Natural killer cell (primary cell): ENCODE measurements at regions of chr14 and their contacts with region 1.

Region 1: DNA sequence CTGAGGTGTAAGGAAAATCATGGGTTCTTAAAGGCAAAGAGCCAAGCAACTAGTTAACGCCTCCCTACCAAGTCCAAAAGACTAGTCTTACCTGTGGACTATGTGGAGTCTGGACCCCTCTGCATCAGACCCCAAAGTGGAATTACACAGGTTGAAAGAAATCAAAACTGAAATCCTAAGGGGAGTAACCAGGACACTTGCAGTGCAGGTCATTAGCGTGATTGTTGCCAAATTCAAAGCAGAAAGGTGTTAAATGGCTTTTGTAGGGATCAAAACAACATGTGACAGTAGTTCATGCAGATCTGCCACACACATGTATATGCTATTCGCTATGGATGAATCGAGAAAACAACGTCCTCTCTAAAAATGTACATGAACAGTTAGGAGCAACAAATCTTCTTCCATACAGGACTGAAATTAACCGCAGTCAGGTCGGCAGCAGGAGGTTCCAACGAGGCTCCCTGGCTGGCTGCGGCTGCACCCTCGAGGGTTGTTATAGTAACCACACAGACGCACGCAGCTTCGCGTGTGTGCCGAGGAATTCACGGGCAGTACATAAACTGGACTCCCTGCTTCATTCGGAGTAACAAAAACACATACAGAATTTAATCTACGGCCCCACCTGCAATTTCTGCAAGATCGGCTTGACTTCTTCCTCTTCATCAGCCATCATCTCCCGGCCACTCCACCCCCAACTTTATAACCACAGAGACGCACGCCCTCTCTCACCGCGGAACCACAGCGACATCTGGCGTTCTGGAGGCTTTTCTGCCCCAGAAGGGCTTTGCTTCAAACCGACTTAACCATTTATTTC is at the start of gene TTC5:
- DNase-seq: peak; percentile 91 to 96
- ATAC-seq: peak; percentile 99 to 100 (median 99)
- H3K4me3 ChIP-seq: peak within 1 kb of the TSS; percentile 70
- H3K4me3 Mint-ChIP-seq: peak within 1 kb of the TSS; percentile 92
- H3K27ac ChIP-seq: peak within 1 kb of the TSS; percentile 39
- H3K27ac Mint-ChIP-seq: peak within 1 kb of the TSS; percentile 77 to 82
- H3K4me1 ChIP-seq: peaks cover 4% of the 10 kb centered on the region
- H3K4me1 Mint-ChIP-seq: peaks cover 16 to 26% of the 10 kb centered on the region in 2 donors
- H3K27me3 ChIP-seq: no peaks in the 10 kb centered on the region
- H3K27me3 Mint-ChIP-seq: no peaks in the 10 kb centered on the region
- CTCF ChIP-seq: peak; percentile 74
- total RNA-seq, gene TTC5: 18.1 to 23.5 (median 21.6) TPM

Region 2: DNA sequence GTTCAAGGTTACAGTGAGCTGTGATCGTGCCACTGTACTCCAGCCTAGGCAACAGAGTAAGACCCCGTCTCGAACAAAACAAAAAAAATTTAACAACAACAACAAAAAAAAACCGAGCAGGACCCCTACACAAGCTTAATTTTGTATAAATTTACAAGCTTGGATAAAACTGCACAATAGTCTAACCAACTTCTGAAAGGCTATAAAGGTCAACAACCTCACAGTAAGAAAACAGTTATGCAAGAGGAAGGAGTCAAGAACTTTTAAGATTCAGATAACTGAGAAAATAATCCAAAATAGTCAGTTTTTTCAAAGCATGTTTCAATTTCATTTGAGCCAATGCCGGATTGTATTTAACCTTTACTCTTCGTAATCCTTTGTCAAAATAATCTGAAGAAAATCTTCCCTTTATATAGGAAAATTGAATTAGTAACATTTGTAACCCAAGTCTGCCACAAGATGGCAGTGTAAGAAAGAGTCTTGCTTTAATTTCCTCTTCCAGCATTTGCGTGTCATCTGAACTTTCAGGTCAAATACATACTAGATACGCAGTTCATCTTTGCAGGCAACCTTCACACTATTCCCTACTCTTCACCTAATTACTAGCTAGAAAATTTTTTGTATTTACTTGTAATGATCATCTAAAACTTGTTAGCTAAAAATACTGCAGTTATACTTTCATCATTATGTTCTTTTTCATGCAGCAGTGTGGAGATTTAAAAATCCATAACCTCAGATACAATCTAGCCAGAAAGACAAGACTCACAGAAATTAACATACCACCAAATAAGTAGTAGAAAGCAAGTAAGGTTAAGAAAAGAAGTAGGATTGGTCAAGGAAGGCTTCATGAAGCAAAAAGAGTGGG is 21.8 kb after region 1 on chr14:
- intact Hi-C with region 1: loop called (anchors 1 kb)
- DNase-seq: peak in 1 of 2 donors; percentile 85
- ATAC-seq: peak in 2 of 3 donors; percentile 70 to 75
- H3K4me3 ChIP-seq: no peak overlapping the region
- H3K4me3 Mint-ChIP-seq: no peak overlapping the region
- H3K27ac ChIP-seq: no peak overlapping the region
- H3K27ac Mint-ChIP-seq: peak overlapping the region in 1 of 2 donors; percentile 55
- H3K4me1 ChIP-seq: peaks cover under 1% of the 10 kb centered on the region
- H3K4me1 Mint-ChIP-seq: peaks cover 12 to 14% of the 10 kb centered on the region in 2 donors
- H3K27me3 ChIP-seq: no peaks in the 10 kb centered on the region
- H3K27me3 Mint-ChIP-seq: no peaks in the 10 kb centered on the region
- CTCF ChIP-seq: peak; percentile 81